MCF 10A (cell line): ENCODE measurements at regions of chr1 and their contacts with region 1.

Region 1: DNA sequence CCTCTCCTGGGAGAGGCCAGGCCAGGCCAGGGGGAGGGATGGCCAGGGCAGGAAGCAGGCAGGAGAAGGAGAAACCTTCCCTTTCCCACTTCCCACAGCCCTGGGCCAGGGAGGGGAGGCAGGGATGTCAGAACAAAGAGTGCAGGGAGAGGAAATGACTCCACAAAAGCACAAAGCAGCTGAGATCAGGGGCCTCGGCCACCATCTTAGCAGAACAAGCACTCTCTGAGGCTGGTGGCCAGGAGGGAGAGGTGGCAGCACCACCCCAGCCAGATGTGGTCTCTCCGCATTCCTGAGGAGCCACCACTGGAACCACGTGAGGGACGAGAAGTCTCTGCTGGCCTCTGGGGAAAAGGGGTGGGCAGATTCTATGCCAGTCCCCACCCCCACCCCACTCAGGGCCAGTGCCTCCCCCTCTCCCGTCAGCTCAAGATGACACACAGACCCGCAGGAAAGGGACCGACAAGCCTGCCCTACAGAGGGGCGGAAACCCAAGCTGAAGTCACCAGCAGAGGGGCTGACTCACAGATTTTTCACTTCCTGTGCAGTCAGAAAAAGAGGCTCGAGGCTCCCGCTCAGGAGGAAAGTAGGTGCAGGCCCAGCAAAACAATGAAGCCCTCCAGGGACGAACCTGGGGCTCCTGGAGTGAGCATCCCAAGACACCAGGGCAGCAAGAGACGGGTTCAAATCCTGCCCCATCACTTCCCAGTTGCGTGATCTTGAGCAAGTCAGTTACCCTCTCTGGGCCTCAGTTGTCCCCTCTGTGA is 24.1 kb upstream of the ALDH4A1 start:
- DNase-seq: peak; percentile 87
- H3K4me3 Mint-ChIP-seq: peak overlapping the region; percentile 44
- H3K27ac Mint-ChIP-seq: peak overlapping the region; percentile 75
- H3K4me1 Mint-ChIP-seq: peaks cover 27% of the 10 kb centered on the region
- H3K27me3 Mint-ChIP-seq: no peaks in the 10 kb centered on the region
- CTCF ChIP-seq: no peak

Region 2: GRCh38 chr1:18883636-18884418 is 42.7 kb before region 1 on chr1:
- CTCF ChIA-PET with region 1: no interaction called
- POLR2A ChIA-PET with region 1: no interaction called
- intact Hi-C with region 1: no loop called
- DNase-seq: peak; percentile 65
- H3K4me3 Mint-ChIP-seq: no peak overlapping the region
- H3K27ac Mint-ChIP-seq: no peak overlapping the region
- H3K4me1 Mint-ChIP-seq: peaks cover 5% of the 10 kb centered on the region
- H3K27me3 Mint-ChIP-seq: no peaks in the 10 kb centered on the region
- CTCF ChIP-seq: peak; percentile 86

Region 3: DNA sequence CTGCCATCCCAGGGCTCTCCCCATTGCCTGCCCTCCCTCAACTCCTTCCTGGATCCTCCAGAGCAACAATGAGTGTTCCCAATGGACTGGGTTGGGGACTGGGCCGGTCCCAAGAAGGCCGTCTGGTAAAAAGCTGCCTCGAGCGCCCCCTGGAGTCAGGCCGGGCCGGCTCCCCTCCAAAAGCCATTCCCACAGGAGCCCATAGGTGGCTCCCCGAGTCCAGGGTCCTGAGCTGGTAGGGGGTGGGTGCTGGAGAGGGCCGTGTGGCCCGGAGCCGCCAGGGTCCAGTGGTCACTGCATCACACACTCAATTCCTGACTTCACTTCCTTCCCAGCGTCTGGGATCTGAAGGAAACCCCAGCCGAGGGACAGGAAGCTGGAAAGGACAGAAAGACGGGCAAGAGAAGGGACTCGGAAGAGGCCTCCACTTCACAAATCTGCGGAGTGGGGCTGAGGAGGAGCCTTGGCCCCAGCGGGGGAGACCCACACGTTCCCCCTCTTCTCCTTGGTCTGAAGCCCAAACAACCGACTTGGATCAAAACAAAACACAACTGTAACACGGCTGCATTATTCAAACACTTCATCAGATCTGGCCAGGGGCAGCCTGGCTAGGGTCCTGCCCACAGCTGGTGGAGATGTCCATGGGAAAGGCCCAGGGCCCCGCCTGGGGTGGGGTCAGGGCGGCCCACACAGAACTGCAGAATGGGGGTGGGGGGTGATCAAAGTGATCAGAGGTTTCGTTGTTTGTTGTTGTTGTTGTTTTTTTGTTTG is 13.2 kb before region 1 on chr1:
- CTCF ChIA-PET with region 1: interaction called, 17 read pairs
- POLR2A ChIA-PET with region 1: interaction called, 7 read pairs
- intact Hi-C with region 1: no loop called
- DNase-seq: peak; percentile 78
- H3K4me3 Mint-ChIP-seq: no peak overlapping the region
- H3K27ac Mint-ChIP-seq: no peak overlapping the region
- H3K4me1 Mint-ChIP-seq: no peaks in the 10 kb centered on the region
- H3K27me3 Mint-ChIP-seq: no peaks in the 10 kb centered on the region
- CTCF ChIP-seq: peak; percentile 99

Region 4: GRCh38 chr1:18938008-18938706 is 11.7 kb after region 1 on chr1:
- CTCF ChIA-PET with region 1: interaction called, 3 read pairs
- POLR2A ChIA-PET with region 1: interaction called, 11 read pairs
- intact Hi-C with region 1: no loop called
- DNase-seq: no peak
- H3K4me3 Mint-ChIP-seq: no peak overlapping the region
- H3K27ac Mint-ChIP-seq: no peak overlapping the region
- H3K4me1 Mint-ChIP-seq: peaks cover 21% of the 10 kb centered on the region
- H3K27me3 Mint-ChIP-seq: no peaks in the 10 kb centered on the region
- CTCF ChIP-seq: no peak

Region 5: GRCh38 chr1:18949686-18950400 is 23.3 kb after region 1 on chr1:
- CTCF ChIA-PET with region 1: interaction called, 3 read pairs
- POLR2A ChIA-PET with region 1: interaction called, 34 read pairs
- intact Hi-C with region 1: loop called (anchors 1 kb)
- DNase-seq: peak; percentile 48
- H3K4me3 Mint-ChIP-seq: peak overlapping the region; percentile 64
- H3K27ac Mint-ChIP-seq: peak overlapping the region; percentile 88
- H3K4me1 Mint-ChIP-seq: peaks cover 59% of the 10 kb centered on the region
- H3K27me3 Mint-ChIP-seq: no peaks in the 10 kb centered on the region
- CTCF ChIP-seq: no peak

Region 6: GRCh38 chr1:18956369-18957135 is 30.1 kb after region 1 on chr1 and contains the start of gene IFFO2:
- CTCF ChIA-PET with region 1: interaction called, 3 read pairs
- POLR2A ChIA-PET with region 1: interaction called, 34 read pairs
- intact Hi-C with region 1: loop called (anchors 1 kb)
- DNase-seq: peak; percentile 91
- H3K4me3 Mint-ChIP-seq: peak within 1 kb of the TSS; percentile 74
- H3K27ac Mint-ChIP-seq: no peak within 1 kb of the TSS
- H3K4me1 Mint-ChIP-seq: peaks cover 19% of the 10 kb centered on the region
- H3K27me3 Mint-ChIP-seq: peaks cover 10% of the 10 kb centered on the region
- CTCF ChIP-seq: no peak
- total RNA-seq, gene IFFO2: 10.8 and 21.0 TPM in 2 replicates

Region 7: DNA sequence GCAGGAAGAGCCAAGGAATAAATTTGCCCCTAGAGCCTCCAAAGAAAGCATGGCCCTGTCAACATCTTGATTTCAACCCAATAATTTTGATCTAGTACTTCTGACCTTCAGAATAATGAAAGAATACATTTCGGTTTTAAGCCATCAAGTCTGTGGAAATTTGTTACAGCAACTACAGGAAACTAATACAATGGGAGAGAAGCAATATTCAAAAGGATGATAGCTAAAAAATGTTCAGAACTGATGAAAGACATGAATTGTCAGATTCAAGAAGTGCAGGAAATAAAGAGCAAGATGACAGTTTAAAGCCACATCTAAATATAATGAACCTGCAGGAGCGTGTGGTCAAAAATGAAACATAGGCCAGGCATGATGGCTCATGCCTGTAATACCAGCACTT is 54.7 kb after region 1 on chr1:
- CTCF ChIA-PET with region 1: no interaction called
- POLR2A ChIA-PET with region 1: no interaction called
- intact Hi-C with region 1: no loop called
- DNase-seq: no peak
- H3K4me3 Mint-ChIP-seq: no peak overlapping the region
- H3K27ac Mint-ChIP-seq: no peak overlapping the region
- H3K4me1 Mint-ChIP-seq: no peaks in the 10 kb centered on the region
- H3K27me3 Mint-ChIP-seq: peaks cover 21% of the 10 kb centered on the region
- CTCF ChIP-seq: no peak